ENCODE measurements at regions of chr4 and their contacts with region 1.

Region 1: DNA sequence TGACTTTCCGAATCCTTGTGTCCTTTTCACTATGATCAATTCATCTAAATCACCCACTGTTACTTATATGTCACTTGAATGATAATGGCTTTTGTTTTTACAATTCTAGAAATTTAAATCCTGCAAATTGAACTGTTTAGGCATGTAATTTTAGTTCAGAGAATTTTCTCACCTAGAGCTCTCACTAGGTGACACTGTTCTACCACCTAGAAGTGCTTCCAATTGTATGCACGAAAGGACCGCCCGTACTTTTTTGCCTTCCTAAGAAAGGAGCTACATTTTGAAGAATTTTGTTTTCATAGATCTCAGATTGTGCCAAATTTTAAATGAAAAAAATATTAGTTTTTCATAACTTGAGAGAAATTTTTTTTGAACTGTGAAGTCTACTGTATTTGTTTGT is 481.6 kb upstream of the FSTL5 start:
- DNase-seq: no peak
- ATAC-seq: peak; percentile 71
- H3K4me3 Mint-ChIP-seq: no peak overlapping the region
- H3K27ac Mint-ChIP-seq: no peak overlapping the region
- H3K4me1 Mint-ChIP-seq: no peaks in the 10 kb centered on the region
- H3K27me3 Mint-ChIP-seq: no peaks in the 10 kb centered on the region
- CTCF ChIP-seq: no peak

Region 2: DNA sequence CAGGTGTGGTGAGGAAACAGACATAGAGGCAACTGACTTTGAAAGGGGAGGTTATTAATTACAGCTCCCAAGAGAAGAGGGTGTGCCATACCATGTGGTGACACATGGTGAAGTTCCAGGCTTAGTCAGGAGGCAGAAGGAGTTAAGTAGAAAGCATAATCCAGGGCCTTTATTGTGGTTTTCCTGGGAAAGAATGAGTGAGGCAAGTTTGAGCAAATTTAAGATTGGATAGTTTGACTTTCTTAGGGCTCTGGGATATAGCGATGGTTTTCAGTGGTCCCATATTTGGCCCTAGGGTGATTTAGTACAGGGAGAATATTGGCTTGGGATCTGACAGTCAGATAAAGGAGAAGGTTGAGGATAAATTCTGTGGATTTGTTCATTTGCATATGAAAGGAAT is 14.3 kb after region 1 on chr4:
- CTCF ChIA-PET with region 1: interaction called, 10 read pairs
- POLR2A ChIA-PET with region 1: no interaction called
- DNase-seq: no peak
- ATAC-seq: no peak
- H3K4me3 Mint-ChIP-seq: no peak overlapping the region
- H3K27ac Mint-ChIP-seq: no peak overlapping the region
- H3K4me1 Mint-ChIP-seq: peaks cover 34% of the 10 kb centered on the region
- H3K27me3 Mint-ChIP-seq: no peaks in the 10 kb centered on the region
- CTCF ChIP-seq: no peak

Region 3: GRCh38 chr4:163042306-163042705 is 396.9 kb after region 1 on chr4:
- CTCF ChIA-PET with region 1: interaction called, 26 read pairs
- POLR2A ChIA-PET with region 1: no interaction called
- DNase-seq: no peak
- ATAC-seq: no peak
- H3K4me3 Mint-ChIP-seq: no peak overlapping the region
- H3K27ac Mint-ChIP-seq: no peak overlapping the region
- H3K4me1 Mint-ChIP-seq: peaks cover 7% of the 10 kb centered on the region; the same call in 1 of the 2 replicates
- H3K27me3 Mint-ChIP-seq: no peaks in the 10 kb centered on the region
- CTCF ChIP-seq: no peak

Measured in WTC11 (cell line).